ENCODE measurements at regions of chr21 and their contacts with region 1.

Region 1: GRCh38 chr21:44329086-44329889 is 9.9 kb downstream of the CFAP410 start:
- DNase-seq: no peak
- ATAC-seq: peak in 1 of 8 donors; percentile 12
- H3K4me3 ChIP-seq: no peak overlapping the region
- H3K27ac ChIP-seq: no peak overlapping the region
- H3K4me1 ChIP-seq: no peaks in the 10 kb centered on the region
- H3K27me3 ChIP-seq: no peaks in the 10 kb centered on the region
- CTCF ChIP-seq: no peak

Region 2: DNA sequence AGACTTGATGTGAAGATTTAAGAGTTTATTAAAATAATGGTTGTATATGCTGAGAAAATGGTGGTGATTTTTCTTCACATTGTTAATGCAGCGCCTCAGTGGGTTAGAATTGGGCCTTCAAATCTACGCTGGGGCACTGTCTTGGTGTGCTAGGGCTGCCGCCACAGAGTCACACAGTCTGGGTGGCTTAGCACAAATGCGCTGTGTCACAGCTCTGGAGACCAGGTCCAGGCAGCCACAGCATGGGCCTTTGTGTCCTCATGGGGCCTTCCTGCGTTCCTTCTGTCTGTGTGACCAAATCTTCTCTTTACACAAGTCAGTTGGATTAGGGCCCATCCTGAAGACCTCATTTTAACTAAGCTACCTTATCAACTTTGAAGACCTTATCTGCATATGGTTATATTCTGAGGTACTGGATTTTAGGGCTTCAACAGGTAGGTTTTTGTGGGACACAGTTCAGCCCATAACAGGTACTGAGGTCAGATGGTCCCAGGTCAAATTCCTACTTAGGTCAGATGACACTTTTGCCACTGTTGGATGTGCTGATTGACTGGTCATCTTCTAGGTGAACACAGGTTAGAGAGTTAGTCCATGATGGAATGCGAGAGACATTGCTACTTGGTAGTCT is 299.7 kb before region 1 on chr21:
- intact Hi-C with region 1: loop called in 1 of 10 experiments (anchors 10 kb)
- DNase-seq: no peak
- ATAC-seq: no peak
- H3K4me3 ChIP-seq: no peak overlapping the region
- H3K27ac ChIP-seq: no peak overlapping the region
- H3K4me1 ChIP-seq: peaks cover 6 to 31% (median 23%) of the 10 kb centered on the region in 9 donors
- H3K27me3 ChIP-seq: no peaks in the 10 kb centered on the region
- CTCF ChIP-seq: no peak

Region 3: DNA sequence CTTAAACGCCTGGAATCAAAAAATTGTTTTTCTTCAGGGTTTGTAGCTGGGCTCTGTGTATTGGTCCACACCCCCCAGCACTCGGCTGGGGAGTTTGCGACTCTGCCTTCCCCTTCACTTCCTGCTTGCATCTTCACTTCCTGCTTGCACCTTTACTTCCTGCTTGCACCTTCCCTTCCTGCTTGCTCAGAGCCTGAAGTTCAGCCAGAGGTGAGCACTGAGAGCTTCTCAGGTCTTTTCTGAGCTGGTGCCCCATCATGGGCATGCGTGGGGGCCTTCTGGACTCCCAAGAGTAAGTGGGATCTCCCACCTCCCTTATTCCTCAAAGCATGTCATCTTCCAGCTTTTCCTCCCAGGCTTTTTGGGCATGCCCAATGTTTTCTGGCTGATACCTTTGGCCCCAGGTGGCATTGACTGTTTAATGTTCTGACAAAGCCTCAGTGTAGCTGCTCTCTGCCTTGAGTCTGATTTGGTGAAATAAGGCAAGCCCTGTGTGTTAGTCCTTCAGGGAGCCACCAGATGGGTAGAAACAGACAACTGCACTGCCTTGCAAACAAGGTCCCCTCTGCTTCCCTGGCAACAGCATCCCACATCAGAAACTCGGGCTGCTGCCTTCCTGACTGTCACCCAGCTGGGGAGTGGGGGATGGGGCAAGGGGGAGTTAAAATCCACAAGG is 218.5 kb after region 1 on chr21:
- intact Hi-C with region 1: no loop called
- DNase-seq: no peak
- ATAC-seq: no peak
- H3K4me3 ChIP-seq: no peak overlapping the region
- H3K27ac ChIP-seq: peak overlapping the region in 1 of 10 donors; percentile 45
- H3K4me1 ChIP-seq: no peaks in the 10 kb centered on the region
- H3K27me3 ChIP-seq: peaks cover 0 to 49% (median 22%) of the 10 kb centered on the region in 7 donors
- CTCF ChIP-seq: no peak

Measured in heart right ventricle (tissue), 16 donors.